ENCODE measurements at regions of chr17 and their contacts with region 1.

Region 1: DNA sequence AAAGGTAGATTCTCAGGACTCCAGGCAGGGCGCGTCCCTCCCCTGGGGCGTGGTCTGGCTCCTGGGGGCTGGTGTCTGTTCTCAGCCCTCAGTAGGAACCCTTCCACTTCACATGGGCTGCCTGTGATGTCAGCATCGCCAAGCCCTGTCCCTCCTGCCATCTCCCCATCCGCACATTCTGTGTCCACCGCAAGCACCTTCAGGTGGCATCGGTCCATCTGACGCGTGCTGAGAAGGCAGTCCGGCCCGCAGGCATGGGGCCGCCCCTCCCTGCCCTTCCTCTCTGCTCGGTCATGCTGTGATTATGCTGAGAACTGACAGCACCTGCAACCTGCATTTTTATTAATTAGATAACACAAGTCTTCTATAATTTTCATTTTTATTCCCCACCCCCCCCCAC is 12.7 kb upstream of the DNAH17 start:
- DNase-seq: no peak
- H3K4me3 ChIP-seq: no peak overlapping the region
- H3K27ac ChIP-seq: no peak overlapping the region
- H3K4me1 ChIP-seq: peaks cover 15% of the 10 kb centered on the region
- H3K27me3 ChIP-seq: peaks cover 0 to 5% of the 10 kb centered on the region in 2 experiments
- CTCF ChIP-seq: no peak
- POLR2A ChIP-seq: no peak

Region 2: DNA sequence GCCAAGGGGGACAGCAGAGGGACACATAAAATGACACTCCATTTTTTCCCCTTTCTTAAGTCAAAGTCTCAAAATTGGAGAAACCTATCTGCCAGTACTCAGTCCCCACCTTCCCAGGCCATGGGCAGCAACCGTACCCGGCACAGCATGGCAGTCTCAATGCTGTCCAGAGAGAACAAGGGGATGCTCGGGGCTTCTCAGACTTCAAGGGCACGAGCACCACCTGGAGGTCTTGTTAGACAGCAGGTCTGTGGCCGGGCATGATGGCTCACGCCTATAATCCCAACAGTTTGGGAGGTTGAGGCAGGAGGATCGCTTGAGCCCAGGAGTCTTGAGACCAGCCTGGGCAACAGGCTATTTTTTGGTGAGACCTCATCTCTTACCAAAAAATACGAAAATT is 15.9 kb before region 1 on chr17:
- CTCF ChIA-PET with region 1: no interaction called
- POLR2A ChIA-PET with region 1: no interaction called
- dilution Hi-C with region 1: no loop called
- intact Hi-C with region 1: no loop called
- DNase-seq: no peak
- H3K4me3 ChIP-seq: no peak overlapping the region
- H3K27ac ChIP-seq: no peak overlapping the region
- H3K4me1 ChIP-seq: no peaks in the 10 kb centered on the region
- H3K27me3 ChIP-seq: peaks cover 0 to 3% of the 10 kb centered on the region in 2 experiments
- CTCF ChIP-seq: no peak
- POLR2A ChIP-seq: no peak

Region 3: DNA sequence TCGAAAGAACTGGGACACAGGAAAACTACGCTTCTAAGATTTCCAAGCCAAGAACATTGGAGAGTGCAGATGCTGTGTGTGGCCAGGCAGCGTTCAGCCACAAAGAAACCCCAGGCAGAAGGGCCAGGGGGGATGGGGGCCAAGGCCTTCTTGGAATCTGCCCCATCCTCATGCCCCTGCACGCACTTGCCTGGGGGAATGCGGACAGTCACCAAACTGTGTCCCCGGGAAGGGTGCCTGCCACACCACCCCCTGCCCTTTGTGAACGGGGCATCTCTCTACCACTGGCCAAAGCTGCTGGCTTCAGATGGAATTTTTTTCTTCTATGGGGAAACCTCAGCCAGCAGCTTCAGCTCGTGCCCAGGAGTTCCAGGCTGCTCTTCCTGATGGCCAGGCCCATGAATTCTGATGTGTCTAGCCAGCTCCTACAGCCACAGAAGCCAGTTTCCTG is 19.3 kb after region 1 on chr17:
- CTCF ChIA-PET with region 1: interaction called, 11 read pairs
- POLR2A ChIA-PET with region 1: no interaction called
- dilution Hi-C with region 1: no loop called
- intact Hi-C with region 1: no loop called
- DNase-seq: no peak
- H3K4me3 ChIP-seq: no peak overlapping the region
- H3K27ac ChIP-seq: no peak overlapping the region
- H3K4me1 ChIP-seq: no peaks in the 10 kb centered on the region
- H3K27me3 ChIP-seq: peaks cover 7% of the 10 kb centered on the region in 2 experiments
- CTCF ChIP-seq: no peak
- POLR2A ChIP-seq: no peak

Region 4: GRCh38 chr17:78665952-78666920 is 76.4 kb after region 1 on chr17:
- CTCF ChIA-PET with region 1: interaction called, 4 read pairs
- POLR2A ChIA-PET with region 1: interaction called, 4 read pairs
- dilution Hi-C with region 1: no loop called
- intact Hi-C with region 1: loop called (anchors 1 kb)
- DNase-seq: peak; percentile 94
- H3K4me3 ChIP-seq: no peak overlapping the region
- H3K27ac ChIP-seq: peak overlapping the region; percentile 84
- H3K4me1 ChIP-seq: peaks cover 24% of the 10 kb centered on the region
- H3K27me3 ChIP-seq: peaks cover 0 to 5% of the 10 kb centered on the region in 2 experiments
- CTCF ChIP-seq: no peak
- POLR2A ChIP-seq: peak; percentile 73

Region 5: GRCh38 chr17:78679495-78680390 is 89.9 kb after region 1 on chr17:
- CTCF ChIA-PET with region 1: no interaction called
- POLR2A ChIA-PET with region 1: no interaction called
- dilution Hi-C with region 1: no loop called
- intact Hi-C with region 1: loop called (anchors 1 kb)
- DNase-seq: no peak
- H3K4me3 ChIP-seq: no peak overlapping the region
- H3K27ac ChIP-seq: peak overlapping the region; percentile 79
- H3K4me1 ChIP-seq: peaks cover 19% of the 10 kb centered on the region
- H3K27me3 ChIP-seq: no peaks in the 10 kb centered on the region
- CTCF ChIP-seq: no peak
- POLR2A ChIP-seq: no peak

Measured in endothelial cell of umbilical vein (primary cell).